Activated CD4-positive, alpha-beta T cell treated with anti-CD3 and anti-CD28 coated beads for 36 hours (primary cell): ENCODE measurements at regions of chr13 and their contacts with region 1.

Region 1: DNA sequence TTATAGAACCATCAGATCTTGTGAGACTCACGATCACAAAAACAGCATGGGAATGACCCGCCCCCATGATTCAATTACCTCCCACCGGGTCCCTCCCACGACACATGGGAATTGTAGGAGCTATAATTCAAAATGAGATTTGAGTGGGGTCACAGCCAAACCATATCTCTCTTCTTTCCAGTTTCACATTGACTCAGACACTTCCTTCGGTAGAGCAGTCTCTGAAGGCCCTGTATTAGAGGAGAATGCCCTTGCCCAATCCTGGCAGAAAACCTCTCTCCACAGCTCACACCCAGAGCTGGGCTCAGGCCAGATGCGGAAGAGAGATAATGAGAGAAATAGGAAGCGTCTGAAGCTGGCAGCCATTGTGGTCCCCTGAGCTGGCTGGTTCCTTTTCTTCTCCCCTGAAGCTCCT is 72.4 kb upstream of the CLDN10 start:
- DNase-seq: peak; percentile 27
- ATAC-seq: peak; percentile 44
- H3K4me3 Mint-ChIP-seq: no peak overlapping the region
- H3K27ac Mint-ChIP-seq: no peak overlapping the region
- H3K4me1 Mint-ChIP-seq: peaks cover 8% of the 10 kb centered on the region
- H3K27me3 Mint-ChIP-seq: no peaks in the 10 kb centered on the region

Region 2: GRCh38 chr13:94435604-94436226 is 1044.4 kb before region 1 on chr13:
- CTCF ChIA-PET with region 1: no interaction called
- POLR2A ChIA-PET with region 1: no interaction called
- intact Hi-C with region 1: loop called in 1 of 2 experiments (anchors 2 kb)
- DNase-seq: no peak
- ATAC-seq: peak; percentile 65
- H3K4me3 Mint-ChIP-seq: no peak overlapping the region
- H3K27ac Mint-ChIP-seq: no peak overlapping the region
- H3K4me1 Mint-ChIP-seq: peaks cover 33% of the 10 kb centered on the region
- H3K27me3 Mint-ChIP-seq: no peaks in the 10 kb centered on the region

Region 3: DNA sequence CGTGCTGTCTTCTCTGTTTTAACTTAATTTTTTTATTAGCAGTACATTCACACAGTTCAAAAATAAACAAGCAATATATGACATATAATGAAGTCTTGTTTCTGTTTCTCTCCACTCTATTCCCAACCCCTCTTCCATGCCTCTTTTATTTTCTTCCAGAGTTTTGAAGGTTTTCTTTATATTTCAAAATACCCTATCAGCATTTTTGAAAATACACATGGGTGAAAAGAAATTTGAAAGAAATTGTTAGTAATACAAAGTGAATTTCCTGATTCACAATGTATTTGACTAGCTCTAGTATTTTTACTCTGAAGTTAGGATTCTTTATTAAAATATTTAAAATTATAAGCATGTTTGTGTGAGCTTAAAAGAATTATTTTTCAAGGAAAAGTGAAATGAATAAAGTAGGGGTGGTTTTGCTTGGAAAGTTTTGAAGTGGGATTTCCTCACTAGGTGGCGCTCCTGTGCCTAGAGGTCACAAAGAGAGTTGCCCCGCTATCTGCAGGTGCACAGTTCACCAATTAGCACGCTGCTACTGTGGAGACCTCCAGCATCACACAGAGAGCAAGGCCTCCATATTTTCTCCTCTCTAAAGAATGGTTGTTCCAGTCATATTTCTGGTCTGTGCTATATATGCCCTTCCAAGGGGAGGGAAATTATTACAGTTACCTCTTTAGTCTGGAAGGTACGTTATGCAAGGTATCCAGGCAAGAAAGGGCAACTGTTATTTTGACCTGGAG is 805.4 kb before region 1 on chr13:
- CTCF ChIA-PET with region 1: no interaction called
- POLR2A ChIA-PET with region 1: no interaction called
- intact Hi-C with region 1: loop called in 1 of 2 experiments (anchors 5 kb)
- DNase-seq: peak; percentile 80
- ATAC-seq: peak; percentile 72
- H3K4me3 Mint-ChIP-seq: no peak overlapping the region
- H3K27ac Mint-ChIP-seq: no peak overlapping the region
- H3K4me1 Mint-ChIP-seq: no peaks in the 10 kb centered on the region
- H3K27me3 Mint-ChIP-seq: peaks cover 27% of the 10 kb centered on the region

Region 4: DNA sequence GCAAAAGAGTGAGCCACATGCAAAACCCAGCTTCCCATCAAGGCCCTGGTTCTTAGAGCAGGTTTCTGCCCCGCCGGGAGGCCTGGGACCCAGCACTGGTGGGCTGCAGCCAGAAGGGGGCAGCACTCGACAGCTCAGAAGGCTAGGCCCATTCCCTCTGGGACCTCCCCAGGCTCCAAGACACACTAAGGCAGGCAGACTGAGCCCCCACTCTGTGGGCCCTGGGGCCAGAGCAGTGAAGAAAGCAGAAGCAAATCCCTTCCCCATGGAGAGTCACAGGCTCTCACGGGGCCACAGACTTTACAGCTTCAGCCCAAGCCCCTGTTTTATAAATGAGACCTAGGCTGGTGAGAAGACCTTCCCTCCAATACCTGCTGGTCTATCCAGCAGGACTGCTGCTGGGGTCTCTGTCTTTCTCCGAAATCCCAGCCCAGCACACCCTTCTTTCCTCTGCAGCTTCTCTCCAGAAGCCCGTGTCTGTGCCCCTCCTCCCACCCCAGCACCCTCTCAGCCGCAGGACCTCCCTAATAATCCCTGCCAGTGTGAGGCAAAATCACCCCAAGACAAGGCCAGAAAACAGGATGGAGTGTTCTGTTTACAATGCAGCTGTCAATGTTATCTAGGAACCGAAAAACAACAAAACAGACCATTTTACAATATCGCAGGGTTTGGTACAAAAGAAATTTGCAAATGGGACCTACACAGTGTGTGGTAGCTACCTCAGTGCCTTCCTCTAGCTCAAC is 288.1 kb before region 1 on chr13:
- CTCF ChIA-PET with region 1: interaction called, 4 read pairs
- POLR2A ChIA-PET with region 1: no interaction called
- intact Hi-C with region 1: loop called (anchors 1 kb)
- DNase-seq: peak; percentile 85
- ATAC-seq: peak; percentile 91
- H3K4me3 Mint-ChIP-seq: no peak overlapping the region
- H3K27ac Mint-ChIP-seq: no peak overlapping the region
- H3K4me1 Mint-ChIP-seq: peaks cover 9% of the 10 kb centered on the region
- H3K27me3 Mint-ChIP-seq: no peaks in the 10 kb centered on the region

Region 5: DNA sequence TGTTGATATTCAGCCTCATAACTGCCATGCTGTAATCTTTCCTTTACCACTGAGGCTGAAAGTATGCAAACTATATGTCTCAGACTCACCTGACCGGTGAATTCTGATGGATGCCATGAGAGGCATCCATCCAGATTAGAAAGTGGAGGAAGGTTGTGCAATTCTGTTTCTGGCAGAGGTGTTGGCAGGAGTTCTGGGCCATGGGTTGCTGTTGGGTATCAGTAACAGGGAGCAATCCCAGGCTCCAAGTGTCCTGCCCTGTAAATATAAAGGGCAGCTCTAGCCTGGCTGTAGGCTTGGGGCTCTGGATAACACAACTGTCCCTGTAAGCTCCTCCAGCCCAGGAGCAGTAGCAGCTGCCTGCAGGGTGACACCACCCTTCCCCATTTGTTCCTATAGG is 101.5 kb before region 1 on chr13:
- CTCF ChIA-PET with region 1: interaction called, 3 read pairs
- POLR2A ChIA-PET with region 1: no interaction called
- intact Hi-C with region 1: loop called in 1 of 2 experiments (anchors 1 kb)
- DNase-seq: no peak
- ATAC-seq: no peak
- H3K4me3 Mint-ChIP-seq: no peak overlapping the region
- H3K27ac Mint-ChIP-seq: no peak overlapping the region
- H3K4me1 Mint-ChIP-seq: no peaks in the 10 kb centered on the region
- H3K27me3 Mint-ChIP-seq: peaks cover 5% of the 10 kb centered on the region